ENCODE measurements at regions of chrX and their contacts with region 1.

Region 1: DNA sequence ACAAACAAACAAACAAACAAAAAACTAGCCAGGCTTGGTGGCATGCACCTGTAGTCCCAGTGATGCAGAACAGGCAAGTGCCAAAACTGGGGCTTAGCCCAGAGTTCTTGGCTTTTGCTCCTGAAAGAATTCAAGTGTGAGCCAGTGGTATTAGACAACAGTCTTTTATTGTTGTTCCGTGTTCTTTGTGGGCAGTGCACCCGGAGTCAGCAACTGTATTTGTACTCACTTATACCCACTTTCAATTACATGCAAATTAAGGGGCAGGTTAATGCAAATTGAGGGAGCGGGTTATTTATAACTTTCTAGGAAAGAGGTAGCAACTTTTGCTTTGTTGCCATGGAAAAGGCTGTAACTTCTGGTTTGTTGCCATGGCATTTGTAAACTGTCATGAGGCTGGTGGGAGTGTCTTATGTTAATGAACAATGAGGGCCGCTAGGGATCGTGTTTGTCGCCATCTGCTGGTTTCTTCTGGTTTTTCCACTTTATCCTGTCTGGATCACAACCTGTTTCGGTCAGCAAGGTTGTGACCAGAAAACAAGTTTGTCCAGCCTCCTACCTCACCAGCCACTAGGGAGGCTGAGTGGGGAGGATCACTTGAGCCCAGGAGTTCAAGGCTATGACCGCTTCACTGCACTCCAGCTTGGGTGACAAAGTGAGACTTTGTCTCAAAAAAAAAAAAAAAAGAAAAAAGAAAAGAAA is 88.8 kb upstream of the ESX1 start:
- DNase-seq: peak; percentile 23 to 61 (median 24)
- ATAC-seq: peak; percentile 97
- H3K4me3 ChIP-seq: no peak overlapping the region
- H3K27ac ChIP-seq: no peak overlapping the region
- H3K4me1 ChIP-seq: no peaks in the 10 kb centered on the region
- H3K27me3 ChIP-seq: no peaks in the 10 kb centered on the region
- CTCF ChIP-seq: peak; percentile 54 to 69 (median 60)
- EP300 ChIP-seq: no peak
- POLR2A ChIP-seq: no peak
- RAD21 ChIP-seq: peak; percentile 17 to 41; a peak in 1 of 4 replicates

Region 2: DNA sequence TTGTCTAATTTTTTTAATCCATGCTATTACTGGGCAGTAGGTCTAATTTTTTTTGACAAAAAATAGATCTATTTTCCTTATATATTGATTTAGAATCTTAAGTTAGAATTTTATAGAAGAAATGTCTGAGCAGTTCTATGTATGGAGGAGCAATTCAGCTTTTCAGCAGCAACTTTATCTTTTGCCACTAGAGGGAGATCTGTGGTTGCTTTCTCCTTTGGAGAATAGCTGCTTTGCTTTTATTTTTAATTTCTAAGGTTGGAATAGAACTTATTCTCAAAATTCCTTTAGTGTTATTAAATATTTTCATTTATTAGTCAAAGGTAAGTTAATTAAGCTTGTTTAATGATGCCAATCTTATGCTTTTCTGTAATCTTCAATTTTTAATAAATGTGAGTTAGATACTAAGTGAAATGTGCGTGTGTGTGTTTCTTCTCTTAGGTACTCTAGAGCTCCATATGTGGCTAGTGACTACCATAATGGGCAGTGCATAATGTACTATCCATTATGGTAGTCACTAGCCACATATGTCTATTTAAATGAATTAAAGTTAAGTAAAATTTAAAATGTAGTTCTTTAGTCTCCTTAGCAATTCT is 148.0 kb before region 1 on chrX:
- CTCF ChIA-PET with region 1: no interaction called
- POLR2A ChIA-PET with region 1: no interaction called
- in situ Hi-C with region 1: no loop called
- intact Hi-C with region 1: loop called (anchors 5 kb)
- DNase-seq: peak; percentile 12 to 31 (median 26)
- ATAC-seq: peak; percentile 84
- H3K4me3 ChIP-seq: no peak overlapping the region
- H3K27ac ChIP-seq: no peak overlapping the region
- H3K4me1 ChIP-seq: no peaks in the 10 kb centered on the region
- H3K27me3 ChIP-seq: no peaks in the 10 kb centered on the region
- CTCF ChIP-seq: peak; percentile 34 to 68 (median 57); a peak in 5 of 6 replicates
- EP300 ChIP-seq: no peak
- POLR2A ChIP-seq: no peak
- RAD21 ChIP-seq: peak in 1 of 2 experiments; percentile 37; a peak in 3 of 4 replicates

Measured in K562 (cell line).